ENCODE measurements at regions of chr11 and their contacts with region 1.

Region 1: DNA sequence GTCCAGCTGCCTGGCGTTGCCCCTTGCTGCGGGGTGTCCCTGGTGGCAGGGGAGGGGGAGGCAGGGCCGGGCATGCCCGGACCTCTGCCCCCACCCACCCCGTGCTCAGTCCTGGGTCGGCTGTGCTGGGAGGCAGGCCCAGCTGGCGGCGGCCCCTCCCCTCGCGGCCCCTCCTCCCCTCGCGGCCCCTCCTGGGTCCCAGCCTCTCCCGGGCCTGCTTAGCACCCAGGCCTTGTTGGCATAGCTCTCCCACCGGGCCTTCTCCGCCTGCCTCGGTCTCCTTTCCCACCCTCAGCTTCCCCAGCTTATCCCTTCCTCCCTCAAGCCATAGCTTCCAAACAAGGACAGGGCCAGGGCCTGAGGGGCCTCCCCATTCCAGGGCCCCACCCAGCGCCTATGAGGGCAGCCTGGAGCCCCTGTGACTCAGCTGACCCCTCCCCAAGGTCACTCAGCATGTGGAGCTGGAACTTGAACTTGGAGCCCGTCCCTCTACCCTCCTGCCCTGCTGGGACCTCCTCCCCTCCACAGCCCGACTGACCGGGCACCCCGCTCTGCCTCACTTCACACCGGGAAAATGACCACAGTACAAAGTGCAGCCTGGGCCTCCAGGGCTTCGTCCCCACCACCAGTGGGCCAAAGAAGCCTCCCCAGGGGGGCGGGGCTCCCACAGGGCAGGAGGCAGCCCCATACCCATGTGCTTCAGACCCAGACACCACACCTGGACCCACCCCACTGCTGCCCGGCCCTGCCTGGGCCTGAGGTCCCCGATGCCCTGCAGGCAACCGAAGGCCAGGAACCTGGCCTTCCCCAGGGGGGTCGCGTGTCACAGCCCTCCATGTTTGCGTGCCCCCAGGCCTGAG is 1.2 kb downstream of the EPS8L2 start:
- DNase-seq: peak; percentile 94
- ATAC-seq: peak; percentile 56
- H3K4me3 ChIP-seq: peak overlapping the region; percentile 94 to 97 (median 96); a peak in 5 of 6 replicates
- H3K27ac ChIP-seq: peak overlapping the region; percentile 96
- H3K4me1 ChIP-seq: peaks cover 74% of the 10 kb centered on the region
- H3K27me3 ChIP-seq: no peaks in the 10 kb centered on the region; a peak in 1 of 5 replicates
- CTCF ChIP-seq: peak; percentile 59
- EP300 ChIP-seq: peak; percentile 59 to 75
- POLR2A ChIP-seq: no peak
- RAD21 ChIP-seq: peak; percentile 44; the same call in 1 of the 2 replicates

Region 2: DNA sequence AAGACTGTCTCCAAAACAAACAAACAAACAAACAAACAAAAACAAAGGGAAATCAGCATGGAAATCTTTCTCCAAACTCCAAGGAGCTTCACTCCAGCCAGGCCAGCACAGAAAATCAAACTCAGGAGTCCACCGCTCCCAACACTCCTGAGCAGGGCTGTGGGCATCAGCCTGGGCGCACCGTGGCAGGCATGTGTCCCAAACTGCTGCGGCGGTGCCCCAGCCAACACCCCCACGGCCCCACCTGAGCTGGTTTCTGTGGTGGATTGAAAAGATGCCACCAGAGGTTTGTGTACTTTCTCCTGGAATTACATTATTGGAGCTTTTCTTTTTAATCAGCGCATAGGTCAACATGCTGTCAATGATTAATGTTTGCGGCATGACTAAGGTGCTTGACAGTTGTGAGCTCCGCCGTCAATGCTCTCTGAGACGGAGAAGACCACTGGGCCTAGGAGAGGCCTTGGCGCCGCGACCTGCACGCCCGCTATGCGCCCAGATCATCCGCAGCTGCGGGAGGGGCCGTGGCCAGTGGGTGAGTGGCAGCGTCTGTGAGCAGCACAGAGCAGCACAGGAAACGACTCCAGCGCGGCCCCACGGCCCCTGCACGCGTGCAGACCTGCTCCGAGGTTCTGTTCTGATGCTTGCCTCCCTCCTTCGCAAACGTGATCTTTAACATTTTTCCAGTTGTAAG is 52.0 kb before region 1 on chr11:
- CTCF ChIA-PET with region 1: no interaction called
- POLR2A ChIA-PET with region 1: interaction called, 6 read pairs
- in situ Hi-C with region 1: no loop called
- intact Hi-C with region 1: loop called (anchors 10 kb)
- DNase-seq: peak; percentile 90
- ATAC-seq: peak; percentile 92
- H3K4me3 ChIP-seq: peak overlapping the region in 1 of 3 experiments; percentile 39; a peak in 1 of 6 replicates
- H3K27ac ChIP-seq: peak overlapping the region; percentile 78
- H3K4me1 ChIP-seq: peaks cover 47% of the 10 kb centered on the region
- H3K27me3 ChIP-seq: no peaks in the 10 kb centered on the region
- CTCF ChIP-seq: no peak
- EP300 ChIP-seq: no peak
- POLR2A ChIP-seq: peak in 1 of 2 experiments; percentile 40; a peak in 1 of 4 replicates
- RAD21 ChIP-seq: peak; percentile 23; the same call in 1 of the 2 replicates

Region 3: GRCh38 chr11:727859-728748 is 20.9 kb after region 1 on chr11:
- CTCF ChIA-PET with region 1: no interaction called
- POLR2A ChIA-PET with region 1: interaction called, 203 read pairs
- in situ Hi-C with region 1: no loop called
- intact Hi-C with region 1: loop called (anchors 2 kb)
- DNase-seq: peak; percentile 73
- ATAC-seq: peak; percentile 80
- H3K4me3 ChIP-seq: peak overlapping the region; percentile 19 to 70 (median 43); a peak in 3 of 6 replicates
- H3K27ac ChIP-seq: peak overlapping the region; percentile 62
- H3K4me1 ChIP-seq: peaks cover 38% of the 10 kb centered on the region
- H3K27me3 ChIP-seq: peaks cover 0 to 3% of the 10 kb centered on the region in 2 experiments; a peak in 1 of 5 replicates
- CTCF ChIP-seq: peak; percentile 99
- EP300 ChIP-seq: no peak
- POLR2A ChIP-seq: peak; percentile 33 to 45
- RAD21 ChIP-seq: peak; percentile 95

Region 4: GRCh38 chr11:777288-778255 is 70.4 kb after region 1 on chr11 and contains the start of gene GATD1:
- CTCF ChIA-PET with region 1: no interaction called
- POLR2A ChIA-PET with region 1: interaction called, 8 read pairs
- in situ Hi-C with region 1: no loop called
- intact Hi-C with region 1: loop called (anchors 2 kb)
- DNase-seq: peak; percentile 73
- ATAC-seq: peak; percentile 73
- H3K4me3 ChIP-seq: peak within 1 kb of the TSS; percentile 87 to 92 (median 90)
- H3K27ac ChIP-seq: peak within 1 kb of the TSS; percentile 75
- H3K4me1 ChIP-seq: peaks cover 41% of the 10 kb centered on the region
- H3K27me3 ChIP-seq: no peaks in the 10 kb centered on the region
- CTCF ChIP-seq: no peak
- EP300 ChIP-seq: 0 out of 4 replicates have a peak, but pooled peaks of 1 of the 2 experiments have one; percentile 9
- POLR2A ChIP-seq: peak in 1 of 2 experiments; percentile 57; a peak in 2 of 4 replicates
- RAD21 ChIP-seq: 0 out of 2 replicates have a peak, but pooled peaks have one; percentile 25
- total RNA-seq, gene GATD1: 35.8 and 60.5 TPM in 2 replicates

Region 5: GRCh38 chr11:819129-819931 is 112.1 kb after region 1 on chr11:
- CTCF ChIA-PET with region 1: no interaction called
- POLR2A ChIA-PET with region 1: interaction called, 15 read pairs
- in situ Hi-C with region 1: no loop called
- intact Hi-C with region 1: no loop called
- DNase-seq: peak; percentile 77
- ATAC-seq: peak; percentile 61
- H3K4me3 ChIP-seq: peak overlapping the region; percentile 80 to 98 (median 94)
- H3K27ac ChIP-seq: peak overlapping the region; percentile 92
- H3K4me1 ChIP-seq: peaks cover 24% of the 10 kb centered on the region
- H3K27me3 ChIP-seq: no peaks in the 10 kb centered on the region; a peak in 1 of 5 replicates
- CTCF ChIP-seq: no peak
- EP300 ChIP-seq: no peak
- POLR2A ChIP-seq: peak in 1 of 2 experiments; percentile 89; a peak in 2 of 4 replicates
- RAD21 ChIP-seq: peak; percentile 53; the same call in 1 of the 2 replicates

Measured in HepG2 (cell line).